Esophagus squamous epithelium (tissue), 5 donors: ENCODE measurements at regions of chr2 and their contacts with region 1.

Region 1: GRCh38 chr2:127293748-127294562 is at the start of gene ERCC3:
- DNase-seq: no peak
- H3K4me3 ChIP-seq: peak within 1 kb of the TSS; percentile 66 to 100 (median 90)
- H3K27ac ChIP-seq: peak within 1 kb of the TSS; percentile 65 to 88 (median 86)
- H3K4me1 ChIP-seq: peaks cover 5 to 23% (median 14%) of the 10 kb centered on the region in 3 donors
- H3K27me3 ChIP-seq: no peaks in the 10 kb centered on the region
- CTCF ChIP-seq: no peak
- POLR2A ChIP-seq: peak in 1 of 4 donors; percentile 17
- total RNA-seq, gene ERCC3: 19.3 to 36.6 (median 25.2) TPM

Region 2: GRCh38 chr2:127342101-127342500 is 48.1 kb after region 1 on chr2:
- intact Hi-C with region 1: no loop called
- DNase-seq: no peak
- H3K4me3 ChIP-seq: no peak overlapping the region
- H3K27ac ChIP-seq: no peak overlapping the region
- H3K4me1 ChIP-seq: no peaks in the 10 kb centered on the region
- H3K27me3 ChIP-seq: no peaks in the 10 kb centered on the region
- CTCF ChIP-seq: no peak
- POLR2A ChIP-seq: no peak

Region 3: GRCh38 chr2:127415593-127416505 is 121.9 kb after region 1 on chr2:
- intact Hi-C with region 1: loop called (anchors 10 kb)
- DNase-seq: no peak
- H3K4me3 ChIP-seq: peak overlapping the region; percentile 33 to 67 (median 47)
- H3K27ac ChIP-seq: no peak overlapping the region
- H3K4me1 ChIP-seq: peaks cover 11 to 38% (median 19%) of the 10 kb centered on the region in 3 donors
- H3K27me3 ChIP-seq: peaks cover 0 to 47% (median 0%) of the 10 kb centered on the region in 4 donors
- CTCF ChIP-seq: peak; percentile 58 to 82 (median 79)
- POLR2A ChIP-seq: no peak